HepG2 (cell line): ENCODE measurements at regions of chr15 and their contacts with region 1.

Region 1: GRCh38 chr15:37246065-37246464 is 145.7 kb upstream of the MEIS2 start:
- DNase-seq: no peak
- ATAC-seq: no peak
- H3K4me3 ChIP-seq: no peak overlapping the region
- H3K27ac ChIP-seq: no peak overlapping the region
- H3K4me1 ChIP-seq: no peaks in the 10 kb centered on the region
- H3K27me3 ChIP-seq: no peaks in the 10 kb centered on the region
- CTCF ChIP-seq: no peak
- EP300 ChIP-seq: no peak
- POLR2A ChIP-seq: no peak
- RAD21 ChIP-seq: no peak

Region 2: DNA sequence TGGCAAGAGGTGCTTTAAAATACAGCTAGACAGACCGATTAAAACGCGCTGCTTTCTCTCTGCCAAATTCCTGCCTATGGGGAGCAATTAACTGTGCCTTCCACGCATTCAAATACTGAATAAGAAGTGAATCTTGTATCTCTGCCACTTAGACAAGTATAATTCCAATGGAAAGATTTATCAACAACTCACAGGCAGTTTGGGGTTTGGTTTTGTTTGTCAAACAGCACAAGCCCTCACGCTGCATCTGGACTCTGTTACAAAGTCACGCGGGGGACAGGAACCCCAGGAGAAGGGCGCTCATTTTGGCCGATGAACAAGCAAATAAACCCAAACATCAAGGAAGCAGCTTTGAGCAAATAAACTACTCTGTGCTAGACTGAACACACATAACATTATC is 626.6 kb after region 1 on chr15:
- CTCF ChIA-PET with region 1: no interaction called
- POLR2A ChIA-PET with region 1: no interaction called
- in situ Hi-C with region 1: loop called (anchors 25 kb)
- intact Hi-C with region 1: no loop called
- DNase-seq: no peak
- ATAC-seq: no peak
- H3K4me3 ChIP-seq: no peak overlapping the region
- H3K27ac ChIP-seq: no peak overlapping the region
- H3K4me1 ChIP-seq: no peaks in the 10 kb centered on the region
- H3K27me3 ChIP-seq: no peaks in the 10 kb centered on the region
- CTCF ChIP-seq: no peak
- EP300 ChIP-seq: no peak
- POLR2A ChIP-seq: no peak
- RAD21 ChIP-seq: no peak